ENCODE measurements at regions of chr7 and their contacts with region 1.

Region 1: GRCh38 chr7:105493923-105494315 is 28.2 kb downstream of the PUS7 start:
- DNase-seq: no peak
- H3K4me3 ChIP-seq: no peak overlapping the region
- H3K27ac ChIP-seq: no peak overlapping the region
- H3K4me1 ChIP-seq: no peaks in the 10 kb centered on the region
- H3K27me3 ChIP-seq: no peaks in the 10 kb centered on the region
- CTCF ChIP-seq: no peak
- EP300 ChIP-seq: no peak
- POLR2A ChIP-seq: no peak
- RAD21 ChIP-seq: no peak

Region 2: DNA sequence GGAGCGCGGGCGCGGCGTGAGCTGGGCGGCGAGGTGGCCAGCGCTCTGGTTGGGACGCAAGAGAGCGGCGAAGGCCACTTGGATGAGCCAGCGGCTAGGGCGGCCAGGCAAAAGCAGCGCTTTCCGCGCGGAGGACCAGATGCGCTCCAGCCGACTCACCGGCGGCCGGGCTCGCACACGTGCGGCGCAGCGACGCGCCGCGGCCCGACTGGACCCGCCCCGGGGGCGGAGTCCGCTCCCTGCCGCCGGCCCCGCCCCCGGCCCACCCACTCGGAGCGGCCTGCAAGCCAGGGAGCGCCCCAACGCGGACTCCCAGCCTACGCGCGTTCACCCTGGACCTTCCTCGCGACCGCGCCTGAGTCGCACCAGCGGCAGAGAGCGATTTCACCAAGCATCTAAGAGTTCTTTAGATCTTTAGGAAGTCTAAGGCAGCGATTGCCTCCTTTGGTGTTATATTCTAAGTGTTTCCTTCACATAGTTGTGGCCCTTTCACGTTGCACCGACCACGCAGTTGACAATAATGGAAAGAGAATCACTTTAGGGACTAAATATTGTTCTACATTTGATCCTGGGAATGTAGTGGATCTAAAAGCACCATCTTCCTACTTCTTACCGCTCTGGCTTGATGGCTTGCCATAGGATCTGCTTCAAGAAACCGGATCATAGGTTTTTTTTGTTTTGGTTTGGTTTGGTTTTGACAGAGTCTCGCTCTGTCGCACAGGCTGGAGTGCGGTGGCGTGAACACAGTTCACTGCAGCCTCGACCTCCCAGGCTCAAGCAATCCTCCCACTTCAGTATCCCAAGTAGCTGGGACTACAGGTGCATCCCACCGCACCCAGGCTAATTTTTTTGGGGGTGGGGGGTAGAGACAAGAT is 28.4 kb after region 1 on chr7 and contains the start of gene PUS7:
- CTCF ChIA-PET with region 1: no interaction called
- POLR2A ChIA-PET with region 1: interaction called, 10 read pairs
- DNase-seq: peak; percentile 73 to 85
- H3K4me3 ChIP-seq: peak within 1 kb of the TSS; percentile 70 to 94 (median 73)
- H3K27ac ChIP-seq: peak within 1 kb of the TSS; percentile 84
- H3K4me1 ChIP-seq: peaks cover 0 to 4% (median 2%) of the 10 kb centered on the region in 4 experiments; a peak in 2 of 7 replicates
- H3K27me3 ChIP-seq: no peaks in the 10 kb centered on the region
- CTCF ChIP-seq: no peak
- EP300 ChIP-seq: no peak
- POLR2A ChIP-seq: peak; percentile 96 to 97
- RAD21 ChIP-seq: no peak
- total RNA-seq, gene PUS7: 61.2 and 65.2 TPM in 2 replicates

Region 3: GRCh38 chr7:105611856-105612775 is 118.2 kb after region 1 on chr7:
- CTCF ChIA-PET with region 1: no interaction called
- POLR2A ChIA-PET with region 1: no interaction called
- DNase-seq: no peak
- H3K4me3 ChIP-seq: no peak overlapping the region
- H3K27ac ChIP-seq: no peak overlapping the region; the same call in 1 of the 2 replicates
- H3K4me1 ChIP-seq: peaks cover 0 to 2% (median 0%) of the 10 kb centered on the region in 4 experiments; a peak in 2 of 7 replicates
- H3K27me3 ChIP-seq: no peaks in the 10 kb centered on the region
- CTCF ChIP-seq: no peak
- EP300 ChIP-seq: no peak
- POLR2A ChIP-seq: 0 out of 3 replicates have a peak, but pooled peaks of 1 of the 2 experiments have one; percentile 5
- RAD21 ChIP-seq: no peak

Region 4: GRCh38 chr7:105678811-105679495 is 185.0 kb after region 1 on chr7:
- CTCF ChIA-PET with region 1: no interaction called
- POLR2A ChIA-PET with region 1: no interaction called
- DNase-seq: no peak
- H3K4me3 ChIP-seq: no peak overlapping the region
- H3K27ac ChIP-seq: peak overlapping the region; percentile 5; the same call in 1 of the 2 replicates
- H3K4me1 ChIP-seq: peaks cover 5 to 13% (median 10%) of the 10 kb centered on the region in 4 experiments; a peak in 6 of 7 replicates
- H3K27me3 ChIP-seq: no peaks in the 10 kb centered on the region
- CTCF ChIP-seq: no peak
- EP300 ChIP-seq: no peak
- POLR2A ChIP-seq: no peak
- RAD21 ChIP-seq: no peak

Measured in H1 (cell line).